ENCODE measurements at regions of chr9 and their contacts with region 1.

Region 1: GRCh38 chr9:104682642-104683041 is 11.7 kb upstream of the OR13D1 start:
- DNase-seq: peak; percentile 66
- ATAC-seq: peak; percentile 67
- H3K4me3 ChIP-seq: no peak overlapping the region
- H3K27ac ChIP-seq: no peak overlapping the region
- H3K4me1 ChIP-seq: no peaks in the 10 kb centered on the region
- H3K27me3 ChIP-seq: no peaks in the 10 kb centered on the region
- CTCF ChIP-seq: peak; percentile 65

Region 2: GRCh38 chr9:104608336-104608735 is 74.3 kb before region 1 on chr9:
- CTCF ChIA-PET with region 1: no interaction called
- POLR2A ChIA-PET with region 1: no interaction called
- intact Hi-C with region 1: loop called (anchors 1 kb)
- DNase-seq: peak; percentile 13
- ATAC-seq: no peak
- H3K4me3 ChIP-seq: no peak overlapping the region
- H3K27ac ChIP-seq: no peak overlapping the region
- H3K4me1 ChIP-seq: 0 out of 2 replicates have a peak, but pooled peaks cover 6% of the 10 kb centered on the region
- H3K27me3 ChIP-seq: 0 out of 2 replicates have a peak, but pooled peaks cover 5% of the 10 kb centered on the region
- CTCF ChIP-seq: peak; percentile 48; the same call in 1 of the 2 replicates

Measured in PC-3 (cell line).